ENCODE measurements at regions of chr19 and their contacts with region 1.

Region 1: GRCh38 chr19:38335949-38336637 is 463 bp downstream of the CATSPERG start:
- DNase-seq: peak; percentile 98 to 99
- H3K4me3 ChIP-seq: peak overlapping the region; percentile 93
- H3K4me3 Mint-ChIP-seq: peak overlapping the region; percentile 93
- H3K27ac Mint-ChIP-seq: peak overlapping the region; percentile 73
- H3K4me1 ChIP-seq: peaks cover 21% of the 10 kb centered on the region
- H3K4me1 Mint-ChIP-seq: peaks cover 7% of the 10 kb centered on the region
- H3K27me3 ChIP-seq: no peaks in the 10 kb centered on the region
- H3K27me3 Mint-ChIP-seq: no peaks in the 10 kb centered on the region
- CTCF ChIP-seq: no peak

Region 2: DNA sequence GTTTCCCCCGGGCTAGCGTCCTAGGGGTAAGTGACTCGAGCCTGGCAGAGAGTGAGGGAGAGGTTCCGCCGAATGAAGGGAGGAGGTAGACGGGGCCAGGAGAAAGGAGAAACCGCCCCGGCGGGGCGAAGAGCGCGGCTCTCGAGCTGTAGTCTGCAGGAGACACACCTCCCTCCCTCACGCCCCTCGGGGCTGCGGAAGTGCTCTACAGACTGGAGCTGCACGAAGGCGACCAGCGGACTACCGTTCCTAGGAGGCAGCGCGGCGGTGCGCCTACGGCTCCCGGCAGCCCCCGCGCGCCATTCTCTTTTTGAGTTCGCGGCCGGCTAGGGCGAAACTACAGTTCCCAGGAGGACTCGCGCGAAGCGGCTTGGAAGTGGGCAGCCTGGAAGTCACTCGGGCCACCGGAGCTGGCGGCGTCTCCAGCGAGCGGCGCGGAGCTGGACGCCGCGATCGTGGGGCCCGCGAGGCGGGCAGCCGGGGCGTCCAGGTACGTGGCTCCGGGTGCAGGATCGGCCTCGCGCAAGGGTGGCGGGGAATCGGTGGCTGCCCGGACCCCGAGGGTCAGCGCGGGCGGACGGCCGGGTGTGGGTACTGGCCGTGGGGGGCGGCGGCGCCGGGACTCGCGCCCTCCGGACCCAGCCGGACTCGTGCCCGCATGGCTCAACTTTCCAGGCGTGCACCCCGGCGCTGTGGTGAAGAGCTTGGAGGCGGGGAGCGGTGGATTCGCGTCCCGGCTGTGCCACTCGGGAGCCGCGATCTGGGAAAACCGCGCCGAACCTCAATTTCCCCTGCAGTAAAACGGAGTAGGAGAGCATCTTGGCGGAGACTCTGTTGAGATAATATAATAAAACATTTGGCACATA is 429.0 kb before region 1 on chr19 and contains the start of gene SIPA1L3:
- CTCF ChIA-PET with region 1: no interaction called
- POLR2A ChIA-PET with region 1: no interaction called
- intact Hi-C with region 1: loop called (anchors 2 kb)
- DNase-seq: peak; percentile 99
- H3K4me3 ChIP-seq: peak within 1 kb of the TSS; percentile 77
- H3K4me3 Mint-ChIP-seq: peak within 1 kb of the TSS; percentile 84
- H3K27ac Mint-ChIP-seq: peak within 1 kb of the TSS; percentile 88
- H3K4me1 ChIP-seq: peaks cover 20% of the 10 kb centered on the region
- H3K4me1 Mint-ChIP-seq: peaks cover 23% of the 10 kb centered on the region
- H3K27me3 ChIP-seq: no peaks in the 10 kb centered on the region
- H3K27me3 Mint-ChIP-seq: no peaks in the 10 kb centered on the region
- CTCF ChIP-seq: no peak
- total RNA-seq, gene SIPA1L3: 125 and 129 TPM in 2 replicates

Region 3: DNA sequence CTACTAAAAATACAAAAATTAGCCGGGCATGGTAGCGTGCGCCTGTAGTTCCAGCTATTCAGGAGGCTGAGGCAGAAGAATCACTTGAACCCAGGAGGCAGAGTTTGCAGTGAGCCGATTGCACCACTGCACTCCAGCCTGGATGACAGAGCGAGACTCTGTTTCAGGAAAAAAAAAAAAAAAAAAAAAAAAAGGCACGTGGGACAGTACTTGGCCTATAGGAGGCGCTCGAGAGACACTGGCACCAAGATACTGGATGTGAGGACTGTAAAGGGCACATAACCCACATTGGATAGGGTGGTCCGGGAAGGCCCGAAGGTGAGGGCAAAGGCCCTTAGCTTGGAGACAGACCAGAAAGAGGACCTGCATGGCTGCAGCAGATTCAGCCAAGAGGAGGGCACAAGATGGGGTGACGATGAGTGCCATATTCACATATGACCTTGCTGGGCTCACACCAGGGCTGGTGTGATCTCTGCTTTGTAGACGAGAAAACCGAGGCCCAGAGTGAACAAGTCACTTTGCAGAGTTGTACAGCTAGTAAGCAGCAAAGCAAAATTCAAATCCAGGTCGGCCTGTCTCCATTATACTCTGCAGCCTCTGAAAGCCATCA is 201.4 kb before region 1 on chr19:
- CTCF ChIA-PET with region 1: no interaction called
- POLR2A ChIA-PET with region 1: no interaction called
- intact Hi-C with region 1: no loop called
- DNase-seq: peak in 1 of 2 experiments; percentile 37
- H3K4me3 ChIP-seq: no peak overlapping the region
- H3K4me3 Mint-ChIP-seq: no peak overlapping the region
- H3K27ac Mint-ChIP-seq: peak overlapping the region; percentile 69
- H3K4me1 ChIP-seq: no peaks in the 10 kb centered on the region
- H3K4me1 Mint-ChIP-seq: no peaks in the 10 kb centered on the region
- H3K27me3 ChIP-seq: no peaks in the 10 kb centered on the region; the same call in 1 of the 2 replicates
- H3K27me3 Mint-ChIP-seq: no peaks in the 10 kb centered on the region
- CTCF ChIP-seq: peak; percentile 59 to 65

Region 4: GRCh38 chr19:38229585-38230073 is 106.5 kb before region 1 on chr19:
- CTCF ChIA-PET with region 1: no interaction called
- POLR2A ChIA-PET with region 1: no interaction called
- intact Hi-C with region 1: loop called (anchors 1 kb)
- DNase-seq: peak; percentile 91 to 92
- H3K4me3 ChIP-seq: peak overlapping the region; percentile 37
- H3K4me3 Mint-ChIP-seq: peak overlapping the region; percentile 44
- H3K27ac Mint-ChIP-seq: no peak overlapping the region
- H3K4me1 ChIP-seq: peaks cover 12% of the 10 kb centered on the region; the same call in 1 of the 2 replicates
- H3K4me1 Mint-ChIP-seq: peaks cover 5% of the 10 kb centered on the region
- H3K27me3 ChIP-seq: no peaks in the 10 kb centered on the region
- H3K27me3 Mint-ChIP-seq: peaks cover 12% of the 10 kb centered on the region
- CTCF ChIP-seq: peak in 1 of 2 experiments; percentile 8

Region 5: DNA sequence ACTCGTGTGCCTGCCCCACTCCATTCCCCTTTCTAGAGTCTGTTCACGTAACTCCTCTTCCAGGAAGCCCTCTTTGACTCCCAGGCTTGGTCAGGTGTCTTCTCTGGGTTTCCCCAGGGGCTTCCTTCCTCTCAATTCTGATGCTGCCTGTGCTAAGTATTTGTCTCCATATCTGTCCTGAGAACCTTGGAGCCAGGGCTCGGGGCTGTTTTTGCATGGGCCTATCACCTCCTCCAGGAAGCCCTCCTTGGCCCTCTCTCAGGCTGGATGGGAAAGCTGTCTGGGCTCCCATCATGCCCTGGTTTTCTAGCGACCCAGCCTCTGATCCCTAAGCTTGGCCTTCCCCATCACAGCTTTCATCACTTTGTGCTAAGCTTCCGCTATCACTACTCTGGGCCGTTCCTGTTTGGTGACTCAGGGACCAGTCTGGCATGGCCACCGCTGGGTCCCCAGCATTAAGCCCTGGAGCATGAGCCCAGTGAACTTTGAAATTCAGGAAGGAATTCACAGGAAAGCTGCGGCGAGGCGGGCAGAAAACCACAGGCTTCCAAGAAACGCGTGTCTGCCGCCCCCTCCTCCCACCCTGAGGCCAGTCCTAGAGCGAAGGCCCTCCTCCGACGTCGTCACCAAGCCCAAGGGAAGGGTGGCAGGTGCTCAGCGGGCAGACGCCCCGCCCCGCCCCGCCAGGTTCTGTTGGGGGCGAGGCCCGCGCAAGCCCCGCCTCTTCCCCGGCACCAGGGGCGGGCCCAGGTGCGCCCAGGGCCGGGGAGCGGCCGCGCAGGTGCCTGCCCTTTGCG is 72.2 kb before region 1 on chr19:
- CTCF ChIA-PET with region 1: interaction called, 3 read pairs
- POLR2A ChIA-PET with region 1: interaction called, 7 read pairs
- intact Hi-C with region 1: loop called (anchors 1 kb)
- DNase-seq: peak; percentile 98 to 100
- H3K4me3 ChIP-seq: peak overlapping the region; percentile 15
- H3K4me3 Mint-ChIP-seq: peak overlapping the region; percentile 99
- H3K27ac Mint-ChIP-seq: peak overlapping the region; percentile 98
- H3K4me1 ChIP-seq: peaks cover 49% of the 10 kb centered on the region
- H3K4me1 Mint-ChIP-seq: peaks cover 54% of the 10 kb centered on the region
- H3K27me3 ChIP-seq: no peaks in the 10 kb centered on the region
- H3K27me3 Mint-ChIP-seq: no peaks in the 10 kb centered on the region
- CTCF ChIP-seq: no peak

Region 6: GRCh38 chr19:38361633-38362075 is 25.6 kb after region 1 on chr19:
- CTCF ChIA-PET with region 1: interaction called, 3 read pairs
- POLR2A ChIA-PET with region 1: interaction called, 5 read pairs
- intact Hi-C with region 1: loop called (anchors 1 kb)
- DNase-seq: peak; percentile 92 to 94
- H3K4me3 ChIP-seq: peak overlapping the region; percentile 96
- H3K4me3 Mint-ChIP-seq: peak overlapping the region; percentile 79
- H3K27ac Mint-ChIP-seq: peak overlapping the region; percentile 20
- H3K4me1 ChIP-seq: peaks cover 10% of the 10 kb centered on the region
- H3K4me1 Mint-ChIP-seq: peaks cover 19% of the 10 kb centered on the region
- H3K27me3 ChIP-seq: peaks cover 7% of the 10 kb centered on the region
- H3K27me3 Mint-ChIP-seq: peaks cover 14% of the 10 kb centered on the region
- CTCF ChIP-seq: peak; percentile 22 to 34

Region 7: DNA sequence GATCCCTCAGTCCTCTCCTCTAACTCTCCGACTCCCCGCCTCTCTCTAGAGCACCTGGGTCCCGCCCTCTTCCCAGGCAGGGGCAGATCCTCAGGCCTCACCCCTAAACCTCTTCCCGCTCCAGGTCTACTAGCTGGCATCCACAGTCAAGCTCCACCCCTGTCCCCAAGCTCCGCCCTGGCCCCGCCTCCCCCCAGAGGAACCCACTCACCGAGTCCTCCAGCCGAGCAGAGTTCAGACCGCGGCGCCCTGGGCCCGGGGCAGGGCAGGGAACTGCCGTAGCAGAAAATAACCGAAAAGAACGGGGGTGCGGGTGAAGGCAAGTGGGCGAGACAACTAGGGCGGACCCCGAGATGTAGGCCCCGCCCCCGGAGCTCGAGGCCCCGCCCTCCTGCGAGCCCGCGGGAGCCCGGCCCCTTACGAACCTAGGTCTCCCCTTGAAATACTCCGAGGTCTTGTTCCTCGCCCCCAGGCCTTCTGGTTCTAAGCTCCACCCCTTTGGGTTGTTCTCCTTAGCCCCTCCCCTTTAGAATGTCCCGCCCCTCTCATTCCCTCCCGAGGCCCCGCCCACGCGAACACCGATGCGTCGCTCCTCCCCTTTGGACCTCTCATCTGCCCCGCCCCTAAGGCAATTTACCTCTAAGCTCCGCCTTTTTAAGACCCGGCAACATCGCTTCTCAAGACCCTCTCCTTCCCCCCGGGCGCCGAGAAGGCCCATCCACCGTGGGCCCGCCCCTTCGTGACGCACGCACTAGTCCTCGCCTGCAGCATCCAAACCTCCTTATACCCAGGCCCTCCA is 51.7 kb after region 1 on chr19 and contains the start of gene GGN:
- CTCF ChIA-PET with region 1: no interaction called
- POLR2A ChIA-PET with region 1: no interaction called
- intact Hi-C with region 1: no loop called
- DNase-seq: peak; percentile 91 to 94
- H3K4me3 ChIP-seq: peak within 1 kb of the TSS; percentile 60
- H3K4me3 Mint-ChIP-seq: peak within 1 kb of the TSS; percentile 83
- H3K27ac Mint-ChIP-seq: peak within 1 kb of the TSS; percentile 43
- H3K4me1 ChIP-seq: peaks cover 25% of the 10 kb centered on the region
- H3K4me1 Mint-ChIP-seq: peaks cover 18% of the 10 kb centered on the region
- H3K27me3 ChIP-seq: no peaks in the 10 kb centered on the region
- H3K27me3 Mint-ChIP-seq: no peaks in the 10 kb centered on the region
- CTCF ChIP-seq: no peak
- total RNA-seq, gene GGN: 0.79 TPM in 1 of 2 replicates, not detected in the other

Region 8: DNA sequence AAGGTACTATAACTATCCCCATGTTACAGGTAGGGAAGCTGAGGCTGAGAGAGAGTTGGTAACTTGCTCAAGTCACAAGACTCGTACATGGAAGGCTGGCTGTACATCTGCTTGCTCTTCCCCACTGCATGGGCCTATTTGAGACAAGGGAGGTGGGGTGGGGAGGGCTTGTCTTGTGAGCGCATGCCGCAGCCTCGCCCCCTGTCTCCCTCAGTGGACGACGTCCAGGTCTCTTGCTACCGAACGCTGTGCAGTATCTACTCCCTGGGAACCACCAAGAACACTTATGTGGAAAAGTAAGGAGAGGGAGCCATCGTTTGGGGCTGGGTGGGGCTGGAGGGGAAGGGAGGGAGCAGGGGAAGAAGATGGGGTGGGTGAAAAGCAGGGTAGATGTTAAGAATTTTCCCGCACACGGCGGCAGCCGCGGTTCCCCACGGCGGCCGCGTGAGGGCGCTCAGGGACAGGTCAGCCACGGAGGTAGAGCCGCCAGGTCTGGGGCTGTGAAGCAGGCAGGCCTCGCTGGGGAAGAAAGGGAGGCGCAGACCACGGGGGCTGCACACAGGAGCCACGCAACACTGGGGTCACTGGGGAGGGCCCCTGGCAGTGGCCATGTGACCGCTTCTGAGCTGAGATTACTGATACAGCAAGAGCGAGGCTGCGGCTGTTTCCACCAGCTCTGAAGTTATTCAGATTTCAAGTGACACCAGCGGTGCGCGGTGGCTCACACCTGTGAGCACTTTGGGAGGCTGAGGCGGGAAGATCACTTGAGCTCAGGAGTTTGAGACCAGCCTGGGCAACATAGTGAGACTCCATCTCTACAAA is 178.9 kb after region 1 on chr19:
- CTCF ChIA-PET with region 1: no interaction called
- POLR2A ChIA-PET with region 1: no interaction called
- intact Hi-C with region 1: no loop called
- DNase-seq: peak; percentile 71 to 83
- H3K4me3 ChIP-seq: no peak overlapping the region
- H3K4me3 Mint-ChIP-seq: peak overlapping the region; percentile 20
- H3K27ac Mint-ChIP-seq: no peak overlapping the region
- H3K4me1 ChIP-seq: no peaks in the 10 kb centered on the region
- H3K4me1 Mint-ChIP-seq: no peaks in the 10 kb centered on the region
- H3K27me3 ChIP-seq: no peaks in the 10 kb centered on the region
- H3K27me3 Mint-ChIP-seq: peaks cover 4% of the 10 kb centered on the region
- CTCF ChIP-seq: peak; percentile 94

Measured in Caco-2 (cell line).